ENCODE measurements at regions of chr2 and their contacts with region 1.

Region 1: GRCh38 chr2:170973492-170974303 is 44.6 kb downstream of the GORASP2 start:
- DNase-seq: no peak
- H3K4me3 ChIP-seq: peak overlapping the region; percentile 51 to 80 (median 75)
- H3K27ac ChIP-seq: peak overlapping the region; percentile 67 to 87 (median 80)
- H3K4me1 ChIP-seq: peaks cover 0 to 21% (median 4%) of the 10 kb centered on the region in 3 donors
- H3K27me3 ChIP-seq: no peaks in the 10 kb centered on the region
- CTCF ChIP-seq: peak; percentile 67 to 99 (median 98)
- POLR2A ChIP-seq: peak in 1 of 4 donors; percentile 22

Region 2: GRCh38 chr2:171160119-171160955 is 186.6 kb after region 1 on chr2 and contains the start of gene TLK1:
- intact Hi-C with region 1: loop called (anchors 10 kb)
- DNase-seq: no peak
- H3K4me3 ChIP-seq: peak within 1 kb of the TSS; percentile 82 to 97 (median 84)
- H3K27ac ChIP-seq: peak within 1 kb of the TSS; percentile 93 to 97 (median 96)
- H3K4me1 ChIP-seq: peaks cover 0 to 56% (median 4%) of the 10 kb centered on the region in 3 donors
- H3K27me3 ChIP-seq: no peaks in the 10 kb centered on the region
- CTCF ChIP-seq: peak in 1 of 6 experiments; percentile 27
- POLR2A ChIP-seq: peak in 2 of 4 donors; percentile 31 to 76
- total RNA-seq, gene TLK1: 11.1 to 24.5 (median 20.0) TPM

Region 3: DNA sequence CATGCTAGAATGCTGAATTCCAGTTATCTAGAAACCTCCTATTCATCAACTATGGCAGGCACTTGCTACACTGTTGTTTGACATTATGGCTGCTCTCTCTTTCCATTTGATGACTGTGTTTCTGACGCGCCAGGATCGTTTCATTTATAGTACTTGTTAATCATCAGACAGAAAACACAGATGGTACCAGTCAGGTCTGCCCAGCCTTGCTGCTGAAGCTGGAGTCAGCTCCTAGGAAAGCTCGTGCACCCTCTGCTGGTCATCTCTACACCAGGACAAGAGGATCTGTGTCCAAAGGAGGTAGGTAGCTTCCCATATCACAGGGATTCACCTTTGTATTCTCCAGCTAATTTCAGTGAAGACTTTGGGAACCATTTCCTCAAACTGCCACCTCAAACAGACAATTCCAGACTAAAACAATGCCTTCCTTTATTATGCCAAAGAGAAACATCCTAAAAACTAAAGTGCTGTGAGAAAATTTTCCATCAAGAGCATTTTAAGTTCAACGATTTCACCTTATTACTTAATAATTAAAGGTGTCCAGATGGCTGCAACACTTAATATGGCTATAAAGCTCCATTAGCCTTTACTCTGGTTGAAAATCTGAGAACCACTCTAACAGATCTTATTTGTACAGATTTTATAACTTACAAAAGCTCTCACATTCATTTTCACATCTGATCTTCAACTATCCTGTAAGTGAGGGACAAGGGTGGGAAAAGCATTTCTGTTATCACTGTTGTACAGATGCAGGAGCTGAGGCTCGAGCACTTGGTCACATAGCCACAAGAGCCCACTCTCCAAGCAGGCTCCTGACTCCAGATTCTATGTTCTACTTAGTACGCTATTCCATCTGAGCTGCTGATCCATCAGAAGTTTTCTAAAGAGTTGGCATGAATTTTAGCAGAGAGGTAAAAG is 442.6 kb after region 1 on chr2:
- intact Hi-C with region 1: loop called (anchors 5 kb)
- DNase-seq: peak; percentile 25
- H3K4me3 ChIP-seq: no peak overlapping the region
- H3K27ac ChIP-seq: peak overlapping the region in 3 of 4 donors; percentile 12 to 64 (median 64)
- H3K4me1 ChIP-seq: peaks cover 0 to 5% (median 4%) of the 10 kb centered on the region in 3 donors
- H3K27me3 ChIP-seq: no peaks in the 10 kb centered on the region
- CTCF ChIP-seq: peak; percentile 77 to 88 (median 82)
- POLR2A ChIP-seq: no peak

Measured in esophagus squamous epithelium (tissue), 5 donors.